Activated CD4-positive, alpha-beta memory T cell treated with anti-CD3 and anti-CD28 coated beads, Interleukin-2, amount 10 ng/mL, durations not matched to agents 7 days and 5 days (primary cell): ENCODE measurements at regions of chr5 and their contacts with region 1.

Region 1: GRCh38 chr5:138542956-138543729 is at the start of gene ETF1:
- DNase-seq: peak; percentile 100
- H3K4me3 Mint-ChIP-seq: peak within 1 kb of the TSS; percentile 96
- H3K27ac Mint-ChIP-seq: peak within 1 kb of the TSS; percentile 99
- H3K4me1 Mint-ChIP-seq: peaks cover 64% of the 10 kb centered on the region
- H3K27me3 Mint-ChIP-seq: no peaks in the 10 kb centered on the region
- total RNA-seq, gene ETF1: 77.5 to 81.7 TPM

Region 2: GRCh38 chr5:138331449-138332368 is 211.4 kb before region 1 on chr5 and contains the start of gene CDC25C:
- CTCF ChIA-PET with region 1: interaction called, 3 read pairs
- POLR2A ChIA-PET with region 1: interaction called, 16 read pairs
- DNase-seq: peak; percentile 98
- H3K4me3 Mint-ChIP-seq: peak within 1 kb of the TSS; percentile 83
- H3K27ac Mint-ChIP-seq: peak within 1 kb of the TSS; percentile 62
- H3K4me1 Mint-ChIP-seq: peaks cover 33% of the 10 kb centered on the region
- H3K27me3 Mint-ChIP-seq: no peaks in the 10 kb centered on the region
- total RNA-seq, gene CDC25C: 15.2 to 18.4 TPM

Region 3: DNA sequence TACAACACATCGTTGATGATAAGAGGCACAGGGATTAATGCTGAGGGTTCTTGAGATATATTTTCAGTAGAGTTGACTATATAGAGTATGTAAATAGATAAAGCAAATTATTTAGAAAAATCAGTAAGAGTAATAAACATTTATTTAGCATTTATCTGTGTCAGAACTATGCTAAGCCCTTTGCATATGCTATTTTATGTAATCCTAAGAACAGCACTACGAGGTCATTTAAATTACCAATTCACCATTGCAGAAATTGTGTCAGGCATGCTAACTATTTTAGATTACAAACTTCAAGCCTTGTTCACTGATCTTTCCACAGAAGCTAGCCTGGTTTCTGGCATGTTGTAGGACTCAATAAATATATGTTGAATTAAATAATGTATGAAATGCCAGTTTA is 124.7 kb before region 1 on chr5:
- CTCF ChIA-PET with region 1: no interaction called
- POLR2A ChIA-PET with region 1: no interaction called
- DNase-seq: no peak
- H3K4me3 Mint-ChIP-seq: no peak overlapping the region
- H3K27ac Mint-ChIP-seq: no peak overlapping the region
- H3K4me1 Mint-ChIP-seq: peaks cover 5% of the 10 kb centered on the region
- H3K27me3 Mint-ChIP-seq: no peaks in the 10 kb centered on the region

Region 4: GRCh38 chr5:138464008-138464387 is 79.1 kb before region 1 on chr5:
- CTCF ChIA-PET with region 1: interaction called, 17 read pairs
- POLR2A ChIA-PET with region 1: interaction called, 57 read pairs
- DNase-seq: peak; percentile 93
- H3K4me3 Mint-ChIP-seq: peak overlapping the region; percentile 83
- H3K27ac Mint-ChIP-seq: peak overlapping the region; percentile 91
- H3K4me1 Mint-ChIP-seq: peaks cover 39% of the 10 kb centered on the region
- H3K27me3 Mint-ChIP-seq: peaks cover 21% of the 10 kb centered on the region

Region 5: DNA sequence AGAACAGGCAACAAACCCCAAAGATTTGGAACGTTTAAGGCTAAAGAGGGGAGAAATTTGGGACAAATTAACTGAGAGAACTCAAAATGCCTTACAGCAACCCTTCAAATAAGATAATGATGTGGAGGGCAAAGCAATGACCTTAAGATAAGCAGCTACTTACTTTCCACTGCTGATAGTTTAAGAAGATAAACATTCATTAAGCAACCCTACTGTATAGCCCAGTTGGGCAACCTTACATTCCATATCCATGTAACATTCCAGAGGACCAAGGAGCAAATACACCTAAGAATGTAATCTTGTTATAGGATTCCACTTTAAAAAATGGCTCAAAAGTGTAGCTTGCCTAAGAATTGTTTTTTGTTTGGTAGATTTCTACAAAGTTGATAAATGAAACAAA is 14.9 kb before region 1 on chr5:
- CTCF ChIA-PET with region 1: interaction called, 7 read pairs
- POLR2A ChIA-PET with region 1: interaction called, 31 read pairs
- DNase-seq: no peak
- H3K4me3 Mint-ChIP-seq: no peak overlapping the region
- H3K27ac Mint-ChIP-seq: no peak overlapping the region
- H3K4me1 Mint-ChIP-seq: peaks cover 29% of the 10 kb centered on the region
- H3K27me3 Mint-ChIP-seq: no peaks in the 10 kb centered on the region

Region 6: GRCh38 chr5:138575194-138576015 is 32.3 kb after region 1 on chr5 and contains the start of gene HSPA9:
- CTCF ChIA-PET with region 1: interaction called, 25 read pairs
- POLR2A ChIA-PET with region 1: interaction called, 109 read pairs
- DNase-seq: peak; percentile 98
- H3K4me3 Mint-ChIP-seq: peak within 1 kb of the TSS; percentile 92
- H3K27ac Mint-ChIP-seq: peak within 1 kb of the TSS; percentile 97
- H3K4me1 Mint-ChIP-seq: peaks cover 48% of the 10 kb centered on the region
- H3K27me3 Mint-ChIP-seq: no peaks in the 10 kb centered on the region
- total RNA-seq, gene HSPA9: 205 to 217 TPM